Panc1 (cell line): ENCODE measurements at regions of chr6 and their contacts with region 1.

Region 1: DNA sequence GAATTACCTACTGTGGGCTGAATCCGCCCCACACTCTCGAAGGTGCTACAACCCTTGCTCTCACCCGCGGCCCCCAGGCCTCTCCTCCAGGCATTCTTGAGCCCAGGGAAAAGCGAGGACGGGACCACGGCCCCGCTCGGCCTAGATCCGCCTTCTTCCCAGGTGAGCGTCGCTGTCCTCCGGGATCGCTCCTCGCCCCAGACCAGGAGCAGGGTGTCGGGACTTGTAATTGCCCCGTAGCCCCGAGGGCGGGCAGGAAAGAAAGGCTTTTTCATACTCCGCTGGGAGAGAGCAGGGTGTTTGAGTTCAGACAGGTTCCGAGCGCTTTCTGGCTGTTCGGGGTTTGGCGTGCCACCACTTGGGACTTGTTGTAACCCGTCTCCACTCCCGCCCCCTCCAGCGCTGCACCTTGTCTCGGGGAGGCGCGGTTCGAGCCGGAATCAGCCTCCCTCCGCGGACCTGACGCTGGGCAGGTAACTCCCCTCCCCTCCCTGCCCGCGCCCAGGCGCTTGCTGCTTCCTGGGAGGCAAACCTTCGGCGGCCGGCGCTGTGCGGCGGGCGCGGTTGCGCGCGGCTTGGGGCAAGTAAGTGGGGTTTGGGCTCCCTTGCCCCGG is at the start of gene FAM83B:
- DNase-seq: no peak
- ATAC-seq: peak; percentile 74
- H3K4me3 ChIP-seq: peak within 1 kb of the TSS; percentile 30 to 51
- H3K27ac ChIP-seq: no peak within 1 kb of the TSS
- H3K4me1 ChIP-seq: peaks cover 4% of the 10 kb centered on the region
- H3K27me3 ChIP-seq: peaks cover 44% of the 10 kb centered on the region
- CTCF ChIP-seq: no peak
- total RNA-seq, gene FAM83B: not detected

Region 2: GRCh38 chr6:54002116-54002515 is 844.2 kb before region 1 on chr6:
- CTCF ChIA-PET with region 1: no interaction called
- POLR2A ChIA-PET with region 1: interaction called, 17 read pairs
- in situ Hi-C with region 1: no loop called
- intact Hi-C with region 1: no loop called
- DNase-seq: no peak
- ATAC-seq: no peak
- H3K4me3 ChIP-seq: no peak overlapping the region
- H3K27ac ChIP-seq: no peak overlapping the region
- H3K4me1 ChIP-seq: no peaks in the 10 kb centered on the region
- H3K27me3 ChIP-seq: no peaks in the 10 kb centered on the region
- CTCF ChIP-seq: no peak

Region 3: DNA sequence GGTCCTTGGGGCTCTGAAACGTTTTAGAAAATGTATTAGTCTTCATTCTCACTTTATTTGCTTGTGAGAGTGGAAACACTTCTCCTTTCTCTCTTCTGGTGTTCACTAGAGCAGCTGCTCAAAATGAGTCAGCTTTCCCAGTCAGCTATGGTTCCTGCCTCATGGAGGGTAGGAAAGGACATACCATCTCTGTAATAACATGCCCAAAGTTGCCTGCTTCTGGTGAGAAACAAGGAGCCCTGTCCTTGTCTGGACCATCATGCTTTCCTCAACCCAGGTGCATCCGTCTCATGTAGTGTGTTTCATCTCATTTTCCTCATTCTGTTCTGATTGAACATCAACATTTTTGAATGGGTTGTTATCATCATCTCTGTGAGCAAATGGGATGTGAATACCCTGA is 555.2 kb before region 1 on chr6:
- CTCF ChIA-PET with region 1: no interaction called
- POLR2A ChIA-PET with region 1: no interaction called
- in situ Hi-C with region 1: no loop called
- intact Hi-C with region 1: no loop called
- DNase-seq: no peak
- ATAC-seq: no peak
- H3K4me3 ChIP-seq: no peak overlapping the region
- H3K27ac ChIP-seq: no peak overlapping the region
- H3K4me1 ChIP-seq: no peaks in the 10 kb centered on the region
- H3K27me3 ChIP-seq: no peaks in the 10 kb centered on the region
- CTCF ChIP-seq: no peak